HepG2 (cell line): ENCODE measurements at regions of chr1 and their contacts with region 1.

Region 1: DNA sequence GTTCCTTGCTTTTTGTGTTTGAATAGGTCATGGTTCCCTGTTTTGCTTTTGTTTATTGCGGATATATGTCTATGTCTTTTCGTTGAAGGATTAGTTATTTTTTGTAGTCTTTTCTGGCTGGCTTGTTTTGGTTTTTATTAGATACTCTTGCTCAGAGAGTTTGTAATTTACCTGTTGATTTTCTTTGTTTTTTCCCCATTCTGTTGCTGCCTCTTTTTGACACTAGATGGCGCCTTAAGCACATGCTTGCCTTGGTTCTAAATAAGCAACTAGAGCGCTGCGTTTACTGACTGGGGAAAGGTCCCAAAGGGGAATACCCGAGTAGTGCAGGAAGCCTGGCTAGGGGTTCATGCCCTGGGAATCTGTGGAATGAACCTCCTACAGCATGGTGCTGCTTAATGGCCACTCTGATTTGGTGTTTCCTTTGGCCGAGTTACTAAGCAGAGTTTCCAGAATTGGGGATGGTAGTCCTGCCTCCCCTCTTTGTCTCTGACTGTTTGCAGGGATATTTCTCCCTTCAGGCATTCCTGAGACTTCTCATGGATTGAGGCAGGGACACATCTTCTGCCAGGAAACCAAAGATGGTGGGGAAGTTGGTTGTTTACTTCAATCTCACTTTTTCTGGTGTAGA is 143.2 kb downstream of the PTPRU start:
- DNase-seq: peak; percentile 53
- ATAC-seq: no peak
- H3K4me3 ChIP-seq: no peak overlapping the region
- H3K27ac ChIP-seq: no peak overlapping the region
- H3K4me1 ChIP-seq: no peaks in the 10 kb centered on the region
- H3K27me3 ChIP-seq: peaks cover 0 to 1% of the 10 kb centered on the region in 2 experiments; a peak in 1 of 5 replicates
- CTCF ChIP-seq: peak; percentile 85
- EP300 ChIP-seq: no peak
- POLR2A ChIP-seq: no peak
- RAD21 ChIP-seq: peak; percentile 81

Region 2: DNA sequence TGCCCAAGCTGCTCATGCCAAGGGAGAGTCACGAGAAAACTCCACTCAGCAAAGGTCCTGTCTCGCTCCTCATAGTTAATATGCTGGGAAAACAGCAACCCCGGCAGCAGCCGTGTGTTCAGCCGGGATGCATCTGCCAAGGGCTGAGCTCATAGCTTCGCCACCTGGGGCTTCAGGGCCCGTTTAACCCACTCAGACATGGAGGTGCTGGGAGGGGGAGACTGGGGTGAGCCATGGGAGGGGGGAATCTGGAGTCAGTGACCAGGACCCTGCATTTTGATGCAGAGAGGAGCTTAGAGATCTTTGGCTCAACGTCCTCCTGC is 140.2 kb after region 1 on chr1:
- CTCF ChIA-PET with region 1: no interaction called
- POLR2A ChIA-PET with region 1: no interaction called
- in situ Hi-C with region 1: no loop called
- intact Hi-C with region 1: no loop called
- DNase-seq: no peak
- ATAC-seq: no peak
- H3K4me3 ChIP-seq: no peak overlapping the region
- H3K27ac ChIP-seq: no peak overlapping the region
- H3K4me1 ChIP-seq: no peaks in the 10 kb centered on the region
- H3K27me3 ChIP-seq: peaks cover 0 to 2% of the 10 kb centered on the region in 2 experiments; a peak in 2 of 5 replicates
- CTCF ChIP-seq: no peak
- EP300 ChIP-seq: no peak
- POLR2A ChIP-seq: no peak
- RAD21 ChIP-seq: no peak

Region 3: GRCh38 chr1:30085811-30086770 is 706.5 kb after region 1 on chr1:
- CTCF ChIA-PET with region 1: no interaction called
- POLR2A ChIA-PET with region 1: no interaction called
- in situ Hi-C with region 1: loop called (anchors 25 kb)
- intact Hi-C with region 1: no loop called
- DNase-seq: peak; percentile 8
- ATAC-seq: peak; percentile 75
- H3K4me3 ChIP-seq: no peak overlapping the region
- H3K27ac ChIP-seq: no peak overlapping the region
- H3K4me1 ChIP-seq: peaks cover 13% of the 10 kb centered on the region
- H3K27me3 ChIP-seq: peaks cover 2 to 14% of the 10 kb centered on the region in 2 experiments; a peak in 2 of 5 replicates
- CTCF ChIP-seq: peak; percentile 66
- EP300 ChIP-seq: no peak
- POLR2A ChIP-seq: no peak
- RAD21 ChIP-seq: peak; percentile 54; the same call in 1 of the 2 replicates